Panc1 (cell line): ENCODE measurements at regions of chr10 and their contacts with region 1.

Region 1: GRCh38 chr10:88220941-88221631 is 357.7 kb downstream of the PTEN start:
- DNase-seq: no peak
- ATAC-seq: no peak
- H3K4me3 ChIP-seq: no peak overlapping the region
- H3K27ac ChIP-seq: no peak overlapping the region
- H3K4me1 ChIP-seq: peaks cover 3% of the 10 kb centered on the region; the same call in 1 of the 2 replicates
- H3K27me3 ChIP-seq: peaks cover 7% of the 10 kb centered on the region
- CTCF ChIP-seq: no peak

Region 2: GRCh38 chr10:87868277-87868676 is 352.8 kb before region 1 on chr10:
- CTCF ChIA-PET with region 1: no interaction called
- POLR2A ChIA-PET with region 1: no interaction called
- in situ Hi-C with region 1: no loop called
- intact Hi-C with region 1: no loop called
- DNase-seq: no peak
- ATAC-seq: no peak
- H3K4me3 ChIP-seq: peak overlapping the region; percentile 67 to 81; a peak in 3 of 4 replicates
- H3K27ac ChIP-seq: peak overlapping the region; percentile 81
- H3K4me1 ChIP-seq: peaks cover 23% of the 10 kb centered on the region; the same call in 1 of the 2 replicates
- H3K27me3 ChIP-seq: no peaks in the 10 kb centered on the region
- CTCF ChIP-seq: no peak

Region 3: GRCh38 chr10:88322324-88323063 is 101.4 kb after region 1 on chr10:
- CTCF ChIA-PET with region 1: no interaction called
- POLR2A ChIA-PET with region 1: interaction called, 12 read pairs
- in situ Hi-C with region 1: no loop called
- intact Hi-C with region 1: no loop called
- DNase-seq: no peak
- ATAC-seq: no peak
- H3K4me3 ChIP-seq: no peak overlapping the region
- H3K27ac ChIP-seq: no peak overlapping the region
- H3K4me1 ChIP-seq: no peaks in the 10 kb centered on the region
- H3K27me3 ChIP-seq: no peaks in the 10 kb centered on the region
- CTCF ChIP-seq: no peak